ENCODE measurements at regions of chr3 and their contacts with region 1.

Region 1: DNA sequence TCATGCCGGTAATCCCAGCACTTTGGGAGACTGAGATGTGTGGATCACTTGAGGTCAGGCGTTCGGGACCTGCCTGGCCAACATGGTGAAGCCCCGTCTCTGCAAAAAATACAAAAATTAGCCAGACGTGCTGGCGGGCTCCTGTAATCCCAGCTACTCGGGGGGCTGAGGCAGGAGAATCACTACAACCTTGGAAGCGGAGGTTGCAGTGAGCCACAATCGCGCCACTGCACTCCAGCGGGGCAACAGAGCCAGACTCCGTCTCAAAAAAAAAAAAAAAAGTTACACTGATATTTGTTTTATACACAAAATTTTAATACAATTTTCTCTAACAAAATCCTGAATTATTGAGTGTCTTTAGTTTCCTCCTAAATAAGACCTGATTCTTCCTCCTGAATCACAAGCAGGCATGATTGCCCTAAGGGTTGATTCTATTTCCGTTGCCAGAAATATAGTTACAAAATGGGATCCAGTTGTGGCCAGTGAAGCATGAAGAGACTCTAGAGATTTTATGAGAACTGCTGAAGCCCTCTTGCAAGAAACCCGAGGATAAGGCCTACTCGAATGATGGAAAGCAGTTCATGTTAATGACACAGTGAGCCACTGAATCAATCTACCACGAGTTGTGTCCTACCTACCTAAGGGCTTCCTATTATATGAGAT is 9.6 kb upstream of the SMARCC1 start:
- DNase-seq: no peak
- ATAC-seq: no peak
- H3K4me3 ChIP-seq: no peak overlapping the region
- H3K4me3 Mint-ChIP-seq: no peak overlapping the region
- H3K27ac ChIP-seq: no peak overlapping the region
- H3K27ac Mint-ChIP-seq: no peak overlapping the region
- H3K4me1 ChIP-seq: peaks cover 11% of the 10 kb centered on the region
- H3K4me1 Mint-ChIP-seq: no peaks in the 10 kb centered on the region
- H3K27me3 ChIP-seq: no peaks in the 10 kb centered on the region
- H3K27me3 Mint-ChIP-seq: no peaks in the 10 kb centered on the region
- CTCF ChIP-seq: no peak

Region 2: GRCh38 chr3:47266709-47267489 is 524.4 kb before region 1 on chr3:
- intact Hi-C with region 1: no loop called
- DNase-seq: peak in 1 of 2 donors; percentile 37
- ATAC-seq: no peak
- H3K4me3 ChIP-seq: no peak overlapping the region
- H3K4me3 Mint-ChIP-seq: no peak overlapping the region
- H3K27ac ChIP-seq: no peak overlapping the region
- H3K27ac Mint-ChIP-seq: no peak overlapping the region
- H3K4me1 ChIP-seq: no peaks in the 10 kb centered on the region
- H3K4me1 Mint-ChIP-seq: no peaks in the 10 kb centered on the region
- H3K27me3 ChIP-seq: no peaks in the 10 kb centered on the region
- H3K27me3 Mint-ChIP-seq: no peaks in the 10 kb centered on the region
- CTCF ChIP-seq: no peak

Region 3: GRCh38 chr3:47420511-47421484 is 370.5 kb before region 1 on chr3:
- intact Hi-C with region 1: loop called (anchors 1 kb)
- DNase-seq: peak; percentile 80 to 95
- ATAC-seq: peak; percentile 94 to 99 (median 96)
- H3K4me3 ChIP-seq: no peak overlapping the region
- H3K4me3 Mint-ChIP-seq: peak overlapping the region; percentile 47
- H3K27ac ChIP-seq: peak overlapping the region; percentile 49
- H3K27ac Mint-ChIP-seq: peak overlapping the region; percentile 86 to 91
- H3K4me1 ChIP-seq: peaks cover 24% of the 10 kb centered on the region
- H3K4me1 Mint-ChIP-seq: peaks cover 14 to 30% of the 10 kb centered on the region in 2 donors
- H3K27me3 ChIP-seq: no peaks in the 10 kb centered on the region
- H3K27me3 Mint-ChIP-seq: no peaks in the 10 kb centered on the region
- CTCF ChIP-seq: peak; percentile 85

Region 4: GRCh38 chr3:47522082-47522987 is 269.0 kb before region 1 on chr3:
- intact Hi-C with region 1: loop called (anchors 1 kb)
- DNase-seq: peak; percentile 57 to 87
- ATAC-seq: peak; percentile 85 to 99 (median 98)
- H3K4me3 ChIP-seq: no peak overlapping the region
- H3K4me3 Mint-ChIP-seq: no peak overlapping the region
- H3K27ac ChIP-seq: no peak overlapping the region
- H3K27ac Mint-ChIP-seq: no peak overlapping the region
- H3K4me1 ChIP-seq: peaks cover 6% of the 10 kb centered on the region
- H3K4me1 Mint-ChIP-seq: peaks cover 0 to 8% of the 10 kb centered on the region in 2 donors
- H3K27me3 ChIP-seq: no peaks in the 10 kb centered on the region
- H3K27me3 Mint-ChIP-seq: no peaks in the 10 kb centered on the region
- CTCF ChIP-seq: peak; percentile 89

Measured in natural killer cell (primary cell).